ENCODE measurements at regions of chr18 and their contacts with region 1.

Region 1: DNA sequence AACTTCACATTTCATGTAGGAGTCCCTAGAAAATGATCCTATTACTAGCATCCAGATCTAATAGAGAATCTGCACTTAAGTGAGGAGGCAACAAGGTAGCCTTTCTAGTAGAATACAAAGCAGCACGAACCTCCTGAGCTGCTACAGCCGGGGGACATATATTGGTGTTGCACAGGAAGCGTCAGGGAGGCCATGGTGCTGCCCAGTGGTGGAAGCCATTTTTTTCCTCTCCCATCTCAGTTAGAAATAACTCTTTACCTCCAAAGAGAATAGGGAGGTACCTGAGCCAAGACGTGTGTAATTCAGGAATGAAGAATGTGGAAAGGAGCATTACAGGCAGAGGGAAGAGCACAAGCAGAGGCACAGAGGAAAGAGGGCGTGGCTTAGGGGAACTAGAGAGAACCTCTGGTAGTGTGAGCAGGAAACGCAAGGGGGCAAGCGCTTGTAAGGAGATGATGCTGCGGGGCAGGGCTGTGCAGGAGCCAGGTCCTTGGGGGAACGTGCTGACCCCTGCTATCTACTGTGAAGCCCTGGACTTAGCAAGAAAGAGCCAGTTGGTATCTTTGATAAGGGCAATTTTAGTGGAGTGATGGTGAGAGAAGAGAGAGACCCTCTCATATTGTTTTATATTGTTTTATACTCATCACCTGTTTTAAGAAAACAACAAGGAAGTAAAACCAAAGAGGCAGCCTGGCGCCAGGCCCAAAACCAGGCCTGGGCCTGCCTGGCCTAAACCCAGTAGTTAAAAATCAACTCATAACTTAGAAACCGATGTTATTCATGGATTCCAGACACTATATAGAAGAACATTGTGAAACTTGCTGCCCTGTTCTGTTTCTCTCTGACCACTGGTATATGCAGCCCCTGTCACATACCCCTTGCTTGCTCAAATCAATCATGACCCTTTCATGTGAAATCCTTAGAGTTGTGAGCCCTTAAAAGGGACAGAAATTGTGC is 50.0 kb upstream of the TTC39C start:
- DNase-seq: peak; percentile 78
- H3K4me3 Mint-ChIP-seq: peak overlapping the region; percentile 11
- H3K27ac Mint-ChIP-seq: peak overlapping the region; percentile 72
- H3K4me1 Mint-ChIP-seq: peaks cover 33% of the 10 kb centered on the region
- H3K27me3 Mint-ChIP-seq: no peaks in the 10 kb centered on the region
- CTCF ChIP-seq: peak; percentile 71

Region 2: DNA sequence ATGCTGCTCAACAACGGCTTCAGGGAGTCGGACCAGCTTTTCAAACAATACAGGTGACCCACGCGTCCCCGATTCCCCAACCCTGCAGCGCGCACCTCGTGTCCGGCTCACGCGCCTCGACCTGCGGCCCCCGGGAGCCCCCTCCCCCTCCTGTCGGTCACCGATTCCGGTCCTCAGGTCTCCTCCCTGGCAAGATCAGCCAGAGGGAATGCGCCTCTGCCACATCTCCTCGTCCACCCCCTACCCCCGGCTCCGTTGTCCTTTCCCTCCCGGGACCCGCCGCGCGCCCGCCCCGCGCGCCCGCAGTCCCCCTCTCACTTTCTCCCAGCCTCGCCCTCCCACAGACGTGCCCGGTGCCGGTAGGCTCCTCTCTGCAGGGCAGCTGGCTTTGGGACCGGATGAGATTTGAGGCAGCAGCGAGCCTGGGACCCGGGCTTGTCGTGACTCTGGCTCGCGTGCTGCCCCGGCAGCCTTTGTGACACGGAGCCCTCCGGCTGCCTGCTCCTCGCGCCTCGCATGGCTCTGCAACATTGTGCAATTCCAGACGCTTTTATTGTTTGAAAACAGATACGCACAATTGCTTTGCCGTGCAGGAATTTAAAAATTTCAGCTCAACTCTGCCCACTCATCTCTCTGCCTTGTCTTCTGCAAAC is 50.6 kb after region 1 on chr18:
- CTCF ChIA-PET with region 1: interaction called, 3 read pairs
- intact Hi-C with region 1: loop called (anchors 2 kb)
- DNase-seq: peak; percentile 35
- H3K4me3 Mint-ChIP-seq: peak overlapping the region; percentile 89
- H3K27ac Mint-ChIP-seq: peak overlapping the region; percentile 84
- H3K4me1 Mint-ChIP-seq: peaks cover 25% of the 10 kb centered on the region
- H3K27me3 Mint-ChIP-seq: peaks cover 8% of the 10 kb centered on the region
- CTCF ChIP-seq: no peak

Region 3: GRCh38 chr18:24075731-24076130 is 111.2 kb after region 1 on chr18:
- CTCF ChIA-PET with region 1: interaction called, 6 read pairs
- intact Hi-C with region 1: loop called (anchors 2 kb)
- DNase-seq: no peak
- H3K4me3 Mint-ChIP-seq: no peak overlapping the region
- H3K27ac Mint-ChIP-seq: peak overlapping the region; percentile 70
- H3K4me1 Mint-ChIP-seq: peaks cover 14% of the 10 kb centered on the region
- H3K27me3 Mint-ChIP-seq: no peaks in the 10 kb centered on the region
- CTCF ChIP-seq: no peak

Region 4: GRCh38 chr18:24095976-24096375 is 131.4 kb after region 1 on chr18:
- CTCF ChIA-PET with region 1: no interaction called
- intact Hi-C with region 1: no loop called
- DNase-seq: no peak
- H3K4me3 Mint-ChIP-seq: no peak overlapping the region
- H3K27ac Mint-ChIP-seq: no peak overlapping the region
- H3K4me1 Mint-ChIP-seq: no peaks in the 10 kb centered on the region
- H3K27me3 Mint-ChIP-seq: no peaks in the 10 kb centered on the region
- CTCF ChIP-seq: no peak

Region 5: DNA sequence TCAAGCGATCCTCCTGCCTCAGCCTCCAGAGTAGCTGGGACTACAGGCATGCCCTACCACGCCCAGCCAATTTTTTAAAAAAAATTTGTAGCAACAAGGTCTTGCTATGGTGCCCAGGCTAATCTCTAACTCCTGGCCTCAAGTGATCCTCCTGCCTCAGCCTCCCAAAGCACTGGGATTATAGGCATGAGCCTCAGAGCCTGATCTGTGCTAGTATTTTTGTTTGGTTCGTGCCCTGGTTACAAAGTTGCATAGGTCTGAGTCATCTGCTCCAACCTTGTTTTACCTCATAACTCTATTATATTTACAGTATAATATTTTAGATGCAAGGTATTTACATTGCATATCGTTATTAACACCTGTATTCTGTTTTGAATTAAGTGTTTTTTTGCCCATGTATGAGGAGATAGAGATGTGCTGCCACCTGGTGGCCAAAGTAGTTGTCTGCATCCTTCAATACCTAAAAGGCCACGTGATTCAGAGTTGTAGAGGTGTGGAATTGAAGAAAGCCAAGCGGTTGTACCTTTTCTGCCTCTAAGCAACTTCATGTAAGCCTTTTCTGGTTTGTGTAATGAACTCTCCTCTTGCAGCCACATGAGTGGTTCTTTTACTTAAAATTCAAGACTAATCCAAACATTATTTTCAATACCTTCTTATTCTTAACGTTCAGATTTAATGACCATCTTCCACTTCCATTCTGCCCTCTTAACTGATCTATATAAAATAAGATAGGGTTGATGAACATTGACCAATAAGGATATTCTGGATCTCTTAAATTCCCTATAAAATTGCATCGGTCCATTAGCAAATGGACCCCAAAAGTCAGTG is 154.4 kb after region 1 on chr18:
- CTCF ChIA-PET with region 1: no interaction called
- intact Hi-C with region 1: loop called (anchors 1 kb)
- DNase-seq: peak; percentile 74
- H3K4me3 Mint-ChIP-seq: no peak overlapping the region
- H3K27ac Mint-ChIP-seq: no peak overlapping the region
- H3K4me1 Mint-ChIP-seq: peaks cover 25% of the 10 kb centered on the region
- H3K27me3 Mint-ChIP-seq: no peaks in the 10 kb centered on the region
- CTCF ChIP-seq: peak; percentile 81